ENCODE measurements at regions of chr9 and their contacts with region 1.

Region 1: DNA sequence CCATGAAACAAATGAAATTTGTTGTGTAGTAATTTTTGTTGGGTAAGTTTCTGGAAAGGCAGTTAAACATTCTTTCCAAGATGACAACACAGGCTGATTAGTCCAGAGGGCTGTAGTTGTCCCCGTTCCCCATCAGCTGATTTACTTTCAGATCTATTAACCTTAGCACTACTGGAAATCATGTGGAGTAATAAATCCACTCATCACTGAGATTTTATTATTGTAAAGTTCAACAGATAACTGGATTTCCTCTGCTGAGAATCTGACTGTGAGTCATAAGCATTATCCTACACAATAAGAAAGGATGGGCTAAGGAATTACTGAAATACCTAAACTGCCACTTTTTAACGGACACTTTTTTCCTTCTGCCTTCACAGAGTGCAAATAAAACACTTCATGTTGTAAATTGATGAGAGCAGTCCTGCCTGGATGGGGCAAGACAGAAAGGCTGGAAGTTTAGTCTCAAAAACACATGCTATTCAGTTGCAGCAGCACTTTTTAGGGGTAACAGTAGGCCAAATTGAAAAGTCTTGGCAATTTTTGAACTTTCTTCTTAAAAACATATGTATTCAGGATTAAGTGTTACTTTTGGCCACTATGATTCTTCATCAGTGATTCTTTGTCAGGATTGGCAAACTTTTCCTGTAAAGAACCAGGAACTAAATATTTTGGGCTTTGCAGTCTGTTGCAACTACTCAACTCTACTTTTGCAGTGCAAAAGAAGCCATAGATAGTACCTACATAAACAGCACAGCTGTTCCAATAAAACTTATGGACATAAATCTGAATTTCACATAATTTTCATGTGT is 7.0 kb downstream of the STOM start:
- DNase-seq: no peak
- ATAC-seq: peak; percentile 79
- H3K4me3 ChIP-seq: no peak overlapping the region
- H3K27ac ChIP-seq: peak overlapping the region; percentile 86 to 96
- H3K4me1 ChIP-seq: peaks cover 3 to 7% of the 10 kb centered on the region in 2 donors
- H3K27me3 ChIP-seq: no peaks in the 10 kb centered on the region

Region 2: GRCh38 chr9:121326130-121326838 is 36.7 kb before region 1 on chr9:
- intact Hi-C with region 1: loop called (anchors 2 to 5 kb)
- DNase-seq: peak; percentile 96 to 98
- ATAC-seq: peak; percentile 91
- H3K4me3 ChIP-seq: no peak overlapping the region
- H3K27ac ChIP-seq: peak overlapping the region; percentile 67 to 95
- H3K4me1 ChIP-seq: no peaks in the 10 kb centered on the region
- H3K27me3 ChIP-seq: no peaks in the 10 kb centered on the region

Region 3: GRCh38 chr9:121439711-121440664 is 77.0 kb after region 1 on chr9:
- intact Hi-C with region 1: no loop called
- DNase-seq: no peak
- ATAC-seq: peak; percentile 65
- H3K4me3 ChIP-seq: no peak overlapping the region
- H3K27ac ChIP-seq: no peak overlapping the region
- H3K4me1 ChIP-seq: no peaks in the 10 kb centered on the region
- H3K27me3 ChIP-seq: no peaks in the 10 kb centered on the region

Measured in aorta (tissue), 5 donors.